ENCODE measurements at regions of chr11 and their contacts with region 1.

Region 1: GRCh38 chr11:27040302-27041115 is at the start of gene BBOX1:
- DNase-seq: peak; percentile 96
- H3K4me3 ChIP-seq: peak within 1 kb of the TSS; percentile 6 to 21 (median 7)
- H3K27ac ChIP-seq: peak within 1 kb of the TSS; percentile 80
- H3K4me1 ChIP-seq: peaks cover 16% of the 10 kb centered on the region
- H3K27me3 ChIP-seq: no peaks in the 10 kb centered on the region
- CTCF ChIP-seq: no peak
- total RNA-seq, gene BBOX1: 1.9 to 2.0 TPM

Region 2: GRCh38 chr11:26753723-26754504 is 286.6 kb before region 1 on chr11:
- CTCF ChIA-PET with region 1: no interaction called
- dilution Hi-C with region 1: no loop called
- in situ Hi-C with region 1: loop called in 1 of 2 experiments (anchors 25 kb)
- intact Hi-C with region 1: loop called (anchors 2 kb)
- DNase-seq: peak; percentile 40
- H3K4me3 ChIP-seq: no peak overlapping the region
- H3K27ac ChIP-seq: no peak overlapping the region
- H3K4me1 ChIP-seq: no peaks in the 10 kb centered on the region
- H3K27me3 ChIP-seq: no peaks in the 10 kb centered on the region
- CTCF ChIP-seq: peak; percentile 72 to 81

Region 3: DNA sequence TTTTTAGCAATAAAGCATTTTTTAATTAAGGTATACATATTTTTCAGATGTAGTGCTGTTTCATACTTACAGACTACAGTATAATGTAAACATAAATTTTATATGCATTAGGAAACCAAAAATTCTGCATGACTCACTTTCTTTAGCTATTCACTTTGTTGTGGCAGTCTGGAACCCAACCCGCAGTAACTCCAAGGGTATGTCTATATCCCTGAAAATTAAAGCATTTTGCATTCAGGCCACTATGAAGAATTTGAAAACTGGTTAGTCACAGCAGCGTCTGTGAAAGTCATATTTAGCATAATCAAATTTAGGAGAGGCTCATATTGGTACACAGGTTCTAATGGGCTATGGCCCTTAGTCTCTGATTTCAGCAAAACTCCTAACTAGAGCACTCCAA is 46.9 kb after region 1 on chr11:
- CTCF ChIA-PET with region 1: no interaction called
- dilution Hi-C with region 1: no loop called
- in situ Hi-C with region 1: no loop called
- intact Hi-C with region 1: loop called (anchors 2 kb)
- DNase-seq: peak; percentile 47
- H3K4me3 ChIP-seq: no peak overlapping the region
- H3K27ac ChIP-seq: no peak overlapping the region
- H3K4me1 ChIP-seq: peaks cover 34% of the 10 kb centered on the region
- H3K27me3 ChIP-seq: no peaks in the 10 kb centered on the region
- CTCF ChIP-seq: no peak

Region 4: DNA sequence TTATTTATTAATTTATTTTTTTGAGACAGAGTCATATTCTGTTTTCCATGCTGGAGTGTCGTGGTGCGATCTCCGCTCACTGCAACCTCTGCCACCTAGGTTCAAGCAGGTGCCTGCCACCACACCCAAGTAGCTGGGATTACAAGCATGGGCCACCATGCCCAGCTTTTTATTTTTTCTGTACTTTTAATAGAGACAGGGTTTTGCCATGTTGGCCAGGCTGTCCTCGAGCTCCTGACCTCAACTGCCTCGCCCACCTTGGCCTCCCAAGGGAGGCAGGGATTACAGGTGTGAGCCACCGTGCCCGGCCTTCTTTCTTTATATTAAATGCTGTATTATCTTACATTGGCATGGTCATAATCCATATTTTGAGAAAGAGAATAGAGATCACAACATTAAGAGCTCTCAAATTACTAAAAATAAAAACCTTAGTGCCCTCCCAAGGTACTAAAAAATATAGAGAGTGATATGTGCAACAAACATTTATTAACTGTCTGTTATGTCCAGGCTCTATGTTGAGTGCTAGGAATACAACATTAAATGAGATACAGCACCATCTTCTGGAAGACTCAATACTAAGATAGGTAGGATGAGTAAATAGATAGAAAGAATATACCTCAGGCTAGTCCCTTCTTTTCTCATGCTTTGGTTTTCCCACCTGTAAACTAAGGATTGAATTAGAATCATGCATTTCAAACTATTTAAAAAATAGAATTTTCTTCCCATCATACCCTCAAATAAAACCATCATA is 84.2 kb after region 1 on chr11:
- CTCF ChIA-PET with region 1: no interaction called
- dilution Hi-C with region 1: no loop called
- in situ Hi-C with region 1: no loop called
- intact Hi-C with region 1: loop called (anchors 1 kb)
- DNase-seq: peak; percentile 29
- H3K4me3 ChIP-seq: no peak overlapping the region
- H3K27ac ChIP-seq: no peak overlapping the region
- H3K4me1 ChIP-seq: no peaks in the 10 kb centered on the region
- H3K27me3 ChIP-seq: no peaks in the 10 kb centered on the region
- CTCF ChIP-seq: peak; percentile 17 to 47

Region 5: DNA sequence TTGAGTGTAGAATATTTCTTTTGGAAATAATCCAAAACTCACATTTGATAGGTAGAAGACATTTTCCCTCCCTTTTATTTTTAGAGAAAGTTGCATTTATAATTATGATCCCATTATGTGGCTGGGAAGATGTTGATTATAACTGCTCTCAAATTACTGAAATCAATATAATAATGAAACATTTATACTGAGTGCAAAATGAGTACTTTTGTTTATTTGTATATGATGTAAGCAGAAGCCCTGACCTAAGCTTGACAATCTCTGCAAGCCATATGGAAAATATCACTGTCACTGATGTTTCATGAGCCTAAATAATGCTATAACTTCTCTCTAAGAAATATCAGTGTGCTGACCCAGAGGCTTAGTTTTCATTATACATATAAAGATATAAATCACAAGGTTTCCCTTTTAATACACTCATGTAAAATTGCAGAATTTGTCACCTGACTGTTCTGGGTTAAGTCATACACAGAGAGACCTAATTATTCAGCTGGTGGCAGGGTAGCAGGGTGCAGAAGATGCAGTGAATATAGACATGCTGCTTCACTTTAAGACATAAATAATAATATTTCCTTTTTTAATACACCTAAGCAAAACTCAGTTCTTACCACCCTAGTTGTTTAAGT is 99.3 kb after region 1 on chr11:
- CTCF ChIA-PET with region 1: no interaction called
- dilution Hi-C with region 1: loop called (anchors 5 kb)
- in situ Hi-C with region 1: no loop called
- intact Hi-C with region 1: no loop called
- DNase-seq: no peak
- H3K4me3 ChIP-seq: no peak overlapping the region
- H3K27ac ChIP-seq: no peak overlapping the region
- H3K4me1 ChIP-seq: no peaks in the 10 kb centered on the region
- H3K27me3 ChIP-seq: no peaks in the 10 kb centered on the region
- CTCF ChIP-seq: no peak

Measured in mammary epithelial cell (primary cell).